Activated CD4-positive, alpha-beta memory T cell treated with anti-CD3 and anti-CD28 coated beads for 36 hours (primary cell): ENCODE measurements at regions of chr3 and their contacts with region 1.

Region 1: DNA sequence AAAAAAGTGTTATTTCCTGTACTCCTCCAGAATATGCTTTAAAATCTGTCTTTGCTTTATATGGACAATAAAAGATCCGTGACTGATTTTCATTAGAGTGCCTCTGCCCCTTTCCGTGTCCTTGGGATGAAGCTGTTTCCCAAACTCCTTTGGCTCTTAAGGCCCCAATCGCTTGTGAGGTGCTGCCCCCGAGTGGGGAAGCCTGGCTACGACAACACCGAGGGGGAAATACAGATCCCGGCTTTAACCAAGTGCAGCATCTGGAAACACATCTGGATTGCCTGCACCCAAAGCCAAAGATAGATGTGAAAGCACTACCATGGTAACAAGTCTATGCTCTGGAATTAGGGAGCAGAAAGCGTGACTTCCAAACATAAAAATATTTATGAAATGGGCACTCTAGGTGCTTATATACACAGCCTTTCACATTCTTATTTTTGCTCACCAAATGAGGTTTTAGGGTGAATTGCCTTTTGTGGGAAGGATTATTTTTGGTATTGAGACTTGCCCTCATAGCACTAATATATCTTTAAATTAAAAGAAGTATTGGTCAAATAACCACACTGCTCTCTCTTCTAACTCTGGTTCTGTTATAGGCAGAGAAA is 40.6 kb upstream of the ADCY5 start:
- DNase-seq: peak; percentile 63
- H3K4me3 Mint-ChIP-seq: no peak overlapping the region
- H3K27ac Mint-ChIP-seq: no peak overlapping the region
- H3K4me1 Mint-ChIP-seq: no peaks in the 10 kb centered on the region
- H3K27me3 Mint-ChIP-seq: no peaks in the 10 kb centered on the region

Region 2: GRCh38 chr3:123328851-123329635 is 160.5 kb before region 1 on chr3:
- CTCF ChIA-PET with region 1: interaction called, 12 read pairs
- POLR2A ChIA-PET with region 1: no interaction called
- intact Hi-C with region 1: loop called (anchors 1 kb)
- DNase-seq: peak; percentile 80
- H3K4me3 Mint-ChIP-seq: no peak overlapping the region
- H3K27ac Mint-ChIP-seq: no peak overlapping the region
- H3K4me1 Mint-ChIP-seq: no peaks in the 10 kb centered on the region
- H3K27me3 Mint-ChIP-seq: no peaks in the 10 kb centered on the region

Region 3: GRCh38 chr3:123605789-123606234 is 116.3 kb after region 1 on chr3:
- CTCF ChIA-PET with region 1: no interaction called
- POLR2A ChIA-PET with region 1: no interaction called
- intact Hi-C with region 1: no loop called
- DNase-seq: no peak
- H3K4me3 Mint-ChIP-seq: no peak overlapping the region
- H3K27ac Mint-ChIP-seq: peak overlapping the region; percentile 16
- H3K4me1 Mint-ChIP-seq: peaks cover 14% of the 10 kb centered on the region
- H3K27me3 Mint-ChIP-seq: no peaks in the 10 kb centered on the region